Cardiac septum (tissue), 1 donor: ENCODE measurements at regions of chr4 and their contacts with region 1.

Region 1: DNA sequence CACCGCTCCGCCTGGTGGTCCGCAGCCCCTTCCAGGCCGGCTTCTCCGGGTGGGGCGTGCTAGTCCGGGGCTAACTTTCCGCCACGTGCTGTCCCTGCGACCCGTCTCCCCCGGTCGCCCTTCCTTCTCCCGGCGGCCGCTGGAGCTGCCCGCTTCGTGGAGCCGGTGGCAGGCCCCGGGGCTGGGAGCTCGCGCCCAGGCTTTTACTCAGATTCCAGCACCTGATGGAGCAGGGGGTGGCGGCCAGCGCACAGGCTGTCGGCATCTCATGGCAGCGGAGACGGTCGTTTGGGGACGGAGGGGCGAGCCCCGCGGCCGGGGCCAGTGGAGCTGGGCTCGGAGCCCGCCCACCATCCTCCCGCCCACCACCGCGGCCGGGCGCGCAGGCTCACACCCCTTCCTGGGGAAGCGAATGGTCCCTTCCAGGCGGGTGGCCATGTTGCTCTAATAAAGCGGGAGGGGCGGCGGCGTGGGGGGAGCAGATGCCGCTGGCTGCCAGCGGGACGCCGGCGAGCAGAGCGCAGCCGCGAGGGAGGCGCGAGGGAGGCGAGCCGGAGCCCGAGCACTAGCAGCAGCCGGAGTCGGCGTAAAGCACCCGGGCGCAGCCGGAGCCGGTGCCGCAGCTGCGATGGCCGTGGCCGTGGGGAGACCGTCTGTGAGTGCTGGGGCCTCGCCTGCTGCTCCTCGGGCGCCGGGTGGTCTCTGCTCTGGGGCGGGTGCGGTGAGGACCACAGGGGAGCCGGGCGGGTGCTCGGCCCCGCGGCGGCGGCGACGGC is at the start of gene SEPTIN11:
- DNase-seq: peak; percentile 94
- total RNA-seq, gene SEPTIN11: 41.5 TPM

Region 2: GRCh38 chr4:76515975-76516843 is 433.3 kb before region 1 on chr4:
- intact Hi-C with region 1: loop called (anchors 10 kb)
- DNase-seq: no peak

Region 3: DNA sequence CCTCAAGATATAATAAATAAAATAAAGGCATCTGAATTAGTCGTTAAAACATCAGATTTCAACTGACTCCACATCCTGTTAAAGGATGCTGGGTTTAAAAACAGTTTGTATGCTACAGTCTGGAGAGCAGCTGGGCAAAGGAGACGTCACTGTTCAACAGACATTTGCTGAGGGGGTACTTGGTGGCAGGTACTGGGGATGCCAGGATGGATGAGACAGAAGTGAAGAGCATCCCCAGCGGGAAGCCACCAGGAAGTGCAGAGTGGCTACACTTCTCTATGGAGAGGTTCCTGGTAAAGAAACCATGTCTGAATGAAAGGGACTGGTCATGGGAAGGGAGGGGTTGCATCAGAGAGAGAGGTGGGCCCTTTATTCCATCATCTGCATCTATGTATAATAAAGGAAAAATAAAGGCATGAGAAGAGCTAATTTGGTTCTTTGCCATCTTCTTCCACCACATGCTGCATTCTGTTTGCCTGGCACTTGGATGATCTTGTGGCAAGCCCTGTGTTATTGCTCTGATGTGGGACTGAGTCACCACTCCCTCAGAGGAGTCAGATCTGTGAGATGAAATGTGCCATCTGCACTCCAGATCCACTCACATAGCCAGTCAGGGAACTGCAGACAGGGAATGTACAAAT is 196.5 kb before region 1 on chr4:
- intact Hi-C with region 1: loop called (anchors 2 kb)
- DNase-seq: no peak

Region 4: GRCh38 chr4:76831711-76832373 is 117.6 kb before region 1 on chr4:
- intact Hi-C with region 1: loop called (anchors 2 kb)
- DNase-seq: no peak

Region 5: DNA sequence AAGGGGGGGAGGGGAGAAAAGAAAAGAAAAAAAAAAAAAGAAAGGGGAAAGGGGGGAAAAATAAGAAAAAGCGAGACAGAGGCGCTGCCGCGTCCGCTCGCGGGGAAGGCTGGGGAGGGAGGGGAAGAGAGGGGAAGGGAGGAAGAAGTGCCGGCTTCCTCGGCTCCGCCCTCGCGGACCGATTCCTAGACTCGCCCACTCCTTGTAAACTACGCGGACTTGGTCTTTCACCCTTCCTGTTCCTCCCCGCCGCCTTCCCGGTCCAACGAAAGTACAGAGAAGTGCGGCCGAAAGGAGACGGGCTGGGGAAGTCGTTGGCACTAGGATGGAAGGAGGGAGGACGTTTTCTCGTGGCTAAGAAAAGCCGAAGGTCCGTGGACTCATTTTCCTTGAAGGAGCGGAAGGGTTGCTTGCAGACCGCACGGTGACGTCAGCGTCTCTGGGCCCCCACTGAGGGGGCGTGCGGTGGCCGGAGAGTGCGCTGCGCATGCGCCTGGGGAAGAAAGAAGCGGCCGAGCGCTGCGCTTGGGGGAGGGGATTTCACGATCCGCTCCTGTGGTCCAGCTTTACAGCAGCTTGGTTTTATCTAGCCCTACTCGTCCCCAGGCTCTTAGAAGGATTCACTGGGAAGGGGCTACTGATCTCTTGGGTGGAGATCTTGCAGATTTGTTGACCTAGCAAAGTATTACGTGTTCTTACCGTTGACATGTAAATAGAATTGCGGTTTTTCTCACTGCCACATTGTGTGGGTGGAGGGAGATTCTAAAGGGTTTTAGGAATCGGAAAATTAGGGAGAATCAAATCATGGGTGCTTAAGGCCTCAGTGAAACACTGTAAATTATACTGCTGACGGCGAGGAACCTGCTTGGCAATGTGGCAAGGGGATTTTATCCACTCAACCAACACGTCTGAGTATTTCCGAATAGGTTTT is 126.7 kb after region 1 on chr4 and contains the start of gene CCNI:
- intact Hi-C with region 1: loop called (anchors 2 kb)
- DNase-seq: peak; percentile 98
- total RNA-seq, gene CCNI: 338 TPM